Gastrocnemius medialis (tissue), 4 donors: ENCODE measurements at regions of chr4 and their contacts with region 1.

Region 1: GRCh38 chr4:110631584-110632505 is 9.0 kb upstream of the PITX2 start:
- DNase-seq: peak in 1 of 2 donors; percentile 47
- ATAC-seq: peak; percentile 63 to 71
- H3K4me3 ChIP-seq: peak overlapping the region in 2 of 4 donors; percentile 35 to 36
- H3K27ac ChIP-seq: no peak overlapping the region
- H3K4me1 ChIP-seq: peaks cover 0 to 11% of the 10 kb centered on the region in 2 donors
- H3K27me3 ChIP-seq: peaks cover 0 to 26% (median 10%) of the 10 kb centered on the region in 3 donors
- CTCF ChIP-seq: peak; percentile 13 to 75 (median 71)
- POLR2A ChIP-seq: no peak

Region 2: GRCh38 chr4:110610940-110611831 is 20.7 kb before region 1 on chr4:
- in situ Hi-C with region 1: no loop called
- intact Hi-C with region 1: no loop called
- DNase-seq: no peak
- ATAC-seq: no peak
- H3K4me3 ChIP-seq: peak overlapping the region in 1 of 4 donors; percentile 17
- H3K27ac ChIP-seq: no peak overlapping the region
- H3K4me1 ChIP-seq: peaks cover 5 to 7% of the 10 kb centered on the region in 2 donors
- H3K27me3 ChIP-seq: peaks cover 4 to 24% (median 19%) of the 10 kb centered on the region in 3 donors
- CTCF ChIP-seq: no peak
- POLR2A ChIP-seq: no peak

Region 3: GRCh38 chr4:110959041-110959643 is 327.3 kb after region 1 on chr4:
- in situ Hi-C with region 1: loop called in 3 of 4 experiments (anchors 10 to 25 kb)
- intact Hi-C with region 1: loop called (anchors 2 kb)
- DNase-seq: no peak
- ATAC-seq: no peak
- H3K4me3 ChIP-seq: no peak overlapping the region
- H3K27ac ChIP-seq: no peak overlapping the region
- H3K4me1 ChIP-seq: no peaks in the 10 kb centered on the region
- H3K27me3 ChIP-seq: no peaks in the 10 kb centered on the region
- CTCF ChIP-seq: peak in 4 of 5 experiments; percentile 9 to 45 (median 25)
- POLR2A ChIP-seq: no peak

Region 4: DNA sequence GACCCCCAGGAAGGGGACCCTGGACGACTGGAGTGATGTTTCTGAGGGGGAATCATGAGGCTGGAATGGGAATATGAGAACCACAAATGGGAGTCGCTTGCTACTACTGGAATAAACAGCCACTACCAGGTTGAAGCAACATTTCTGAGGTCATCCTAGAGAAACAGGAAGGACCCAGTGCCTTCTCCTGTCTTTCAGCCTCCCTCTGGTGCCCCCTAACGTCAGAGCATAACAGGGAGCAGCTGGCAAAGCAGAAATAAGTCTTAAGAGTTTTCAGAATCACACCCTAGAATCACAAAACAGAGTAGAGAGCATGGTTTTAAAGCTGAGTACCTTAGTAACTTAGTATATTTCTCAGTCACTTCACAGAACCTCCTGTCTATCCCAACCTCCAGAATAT is 338.8 kb after region 1 on chr4:
- in situ Hi-C with region 1: loop called in 1 of 4 experiments (anchors 25 kb)
- intact Hi-C with region 1: loop called (anchors 5 kb)
- DNase-seq: peak in 1 of 2 donors; percentile 15
- ATAC-seq: no peak
- H3K4me3 ChIP-seq: no peak overlapping the region
- H3K27ac ChIP-seq: no peak overlapping the region
- H3K4me1 ChIP-seq: no peaks in the 10 kb centered on the region
- H3K27me3 ChIP-seq: no peaks in the 10 kb centered on the region
- CTCF ChIP-seq: peak in 3 of 5 experiments; percentile 28 to 43 (median 29)
- POLR2A ChIP-seq: no peak

Region 5: DNA sequence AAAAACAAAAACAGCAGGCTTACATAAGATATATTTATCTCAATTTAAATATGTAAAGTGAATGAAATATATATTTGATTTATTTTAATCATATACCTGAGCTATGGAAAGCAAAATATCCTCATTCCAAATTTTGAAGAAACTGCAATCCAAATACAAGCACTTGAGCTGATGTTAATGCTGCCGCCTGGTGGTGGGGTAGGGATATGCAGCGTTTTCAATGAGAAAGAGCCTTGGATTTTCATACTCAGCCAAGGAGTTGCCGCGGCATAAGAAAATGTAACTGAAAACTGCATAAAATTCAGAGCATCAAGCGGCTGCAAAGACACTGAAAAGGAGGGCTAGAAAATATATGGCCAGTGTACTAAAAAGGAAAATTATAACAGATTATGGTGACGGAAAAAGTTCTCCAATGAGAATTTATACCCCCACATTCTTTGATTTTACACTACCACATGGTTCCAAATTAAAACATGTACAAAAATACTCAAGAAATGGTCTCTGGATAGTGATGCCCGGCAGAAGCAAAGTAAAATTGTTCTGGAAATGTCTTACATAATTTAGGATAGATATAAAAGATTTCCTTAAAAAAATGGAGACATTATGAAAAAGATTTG is 651.3 kb after region 1 on chr4:
- in situ Hi-C with region 1: loop called in 3 of 4 experiments (anchors 25 kb)
- intact Hi-C with region 1: loop called (anchors 2 kb)
- DNase-seq: peak; percentile 2 to 42
- ATAC-seq: no peak
- H3K4me3 ChIP-seq: no peak overlapping the region
- H3K27ac ChIP-seq: no peak overlapping the region
- H3K4me1 ChIP-seq: no peaks in the 10 kb centered on the region
- H3K27me3 ChIP-seq: no peaks in the 10 kb centered on the region
- CTCF ChIP-seq: peak; percentile 57 to 78 (median 60)
- POLR2A ChIP-seq: no peak